Activated CD4-positive, alpha-beta memory T cell treated with anti-CD3 and anti-CD28 coated beads for 36 hours (primary cell): ENCODE measurements at regions of chr4 and their contacts with region 1.

Region 1: DNA sequence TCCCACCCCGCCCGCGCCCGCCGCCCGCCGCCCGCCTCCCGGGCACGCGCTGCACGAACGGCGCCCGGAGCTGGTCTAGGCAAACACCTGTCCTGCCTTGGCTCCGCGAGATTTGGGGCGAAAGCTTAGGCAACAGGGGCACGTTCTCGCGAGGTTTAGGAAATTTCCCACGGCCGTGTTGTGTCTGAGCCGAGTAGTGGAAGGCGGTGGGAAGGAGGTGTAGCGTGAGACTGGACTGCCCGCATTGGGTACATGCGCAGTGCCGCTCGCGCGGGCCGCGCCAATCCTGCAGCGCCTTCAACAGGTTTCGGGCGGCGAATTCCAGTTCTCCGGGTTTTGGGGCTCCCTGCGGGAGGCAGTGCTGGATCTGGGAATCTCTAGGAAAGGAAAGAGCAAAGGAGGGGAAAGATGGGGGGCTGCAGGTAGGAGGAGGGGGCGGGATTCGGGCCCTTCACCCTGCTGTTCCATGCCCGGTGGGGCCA is 1.3 kb upstream of the RBPJ start:
- DNase-seq: peak; percentile 99
- H3K4me3 Mint-ChIP-seq: peak overlapping the region; percentile 100
- H3K27ac Mint-ChIP-seq: peak overlapping the region; percentile 100
- H3K4me1 Mint-ChIP-seq: peaks cover 35% of the 10 kb centered on the region
- H3K27me3 Mint-ChIP-seq: no peaks in the 10 kb centered on the region

Region 2: GRCh38 chr4:25862411-25863346 is 456.8 kb before region 1 on chr4 and contains the start of gene SEL1L3:
- CTCF ChIA-PET with region 1: no interaction called
- POLR2A ChIA-PET with region 1: interaction called, 3 read pairs
- intact Hi-C with region 1: loop called (anchors 1 kb)
- DNase-seq: peak; percentile 74
- H3K4me3 Mint-ChIP-seq: peak within 1 kb of the TSS; percentile 99
- H3K27ac Mint-ChIP-seq: peak within 1 kb of the TSS; percentile 100
- H3K4me1 Mint-ChIP-seq: peaks cover 40% of the 10 kb centered on the region
- H3K27me3 Mint-ChIP-seq: peaks cover 2% of the 10 kb centered on the region
- total RNA-seq, gene SEL1L3: 67.1 to 67.7 TPM

Region 3: DNA sequence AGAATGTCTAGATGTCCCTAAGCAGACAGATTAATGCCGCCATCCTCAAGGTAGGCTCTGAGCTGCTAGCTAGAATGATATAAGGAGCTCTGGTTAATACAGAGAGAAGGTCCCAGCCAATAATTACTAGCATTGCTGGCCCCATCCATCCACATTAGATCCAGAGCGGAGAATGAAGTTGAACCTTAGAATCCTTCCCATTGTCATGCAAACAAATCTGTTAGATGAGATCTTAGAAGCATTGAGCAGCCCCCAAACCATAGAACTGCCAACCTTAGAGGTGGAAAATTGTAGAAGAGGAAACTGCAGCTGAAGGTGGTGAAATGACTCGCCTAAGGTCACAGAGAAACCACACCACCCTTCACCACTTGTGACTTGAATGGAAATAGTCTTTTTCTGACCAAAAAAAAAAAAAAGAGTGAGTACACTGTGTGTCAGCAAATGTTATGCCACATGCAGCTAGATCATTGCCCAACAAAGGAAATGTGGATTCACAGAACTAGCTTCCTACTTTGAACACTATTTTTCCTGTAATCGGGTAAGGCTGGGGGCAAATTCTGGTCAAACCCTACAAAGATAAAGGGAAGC is 243.4 kb before region 1 on chr4:
- CTCF ChIA-PET with region 1: interaction called, 24 read pairs
- POLR2A ChIA-PET with region 1: interaction called, 89 read pairs
- intact Hi-C with region 1: loop called (anchors 1 kb)
- DNase-seq: peak; percentile 81
- H3K4me3 Mint-ChIP-seq: peak overlapping the region; percentile 34
- H3K27ac Mint-ChIP-seq: peak overlapping the region; percentile 96
- H3K4me1 Mint-ChIP-seq: peaks cover 87% of the 10 kb centered on the region
- H3K27me3 Mint-ChIP-seq: no peaks in the 10 kb centered on the region

Region 4: GRCh38 chr4:26130173-26130572 is 189.3 kb before region 1 on chr4:
- CTCF ChIA-PET with region 1: interaction called, 3 read pairs
- POLR2A ChIA-PET with region 1: interaction called, 6 read pairs
- intact Hi-C with region 1: loop called (anchors 5 kb)
- DNase-seq: peak; percentile 59
- H3K4me3 Mint-ChIP-seq: no peak overlapping the region
- H3K27ac Mint-ChIP-seq: peak overlapping the region; percentile 67
- H3K4me1 Mint-ChIP-seq: peaks cover 62% of the 10 kb centered on the region
- H3K27me3 Mint-ChIP-seq: no peaks in the 10 kb centered on the region

Region 5: DNA sequence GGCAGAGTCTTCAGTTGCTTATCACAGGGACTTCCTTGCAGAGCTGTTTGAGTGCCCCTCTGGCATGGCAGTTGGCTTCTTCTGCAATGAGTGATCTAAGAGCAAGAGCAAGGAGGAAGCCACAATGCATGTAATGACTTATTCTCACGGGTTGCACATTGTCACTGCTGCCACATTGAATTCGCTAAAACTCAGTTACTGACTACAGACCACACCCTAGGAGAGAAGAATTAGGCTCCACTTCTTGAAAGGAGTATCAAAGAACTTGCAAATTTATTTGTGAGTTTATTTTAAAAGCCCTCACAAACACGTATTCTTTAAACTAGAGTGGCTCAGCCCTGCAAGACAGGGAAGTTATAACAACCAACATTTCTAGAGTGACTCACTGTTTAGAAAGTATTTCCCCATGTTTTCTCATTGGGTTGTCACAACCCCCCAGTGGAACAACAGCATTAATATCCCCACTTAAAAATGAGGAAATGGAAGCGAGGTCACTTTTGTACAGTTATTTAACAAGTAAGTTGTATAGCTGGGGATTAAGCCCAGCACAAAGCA is 31.1 kb before region 1 on chr4:
- CTCF ChIA-PET with region 1: interaction called, 4 read pairs
- POLR2A ChIA-PET with region 1: interaction called, 4 read pairs
- intact Hi-C with region 1: loop called (anchors 1 kb)
- DNase-seq: peak; percentile 74
- H3K4me3 Mint-ChIP-seq: no peak overlapping the region
- H3K27ac Mint-ChIP-seq: peak overlapping the region; percentile 66
- H3K4me1 Mint-ChIP-seq: peaks cover 25% of the 10 kb centered on the region
- H3K27me3 Mint-ChIP-seq: no peaks in the 10 kb centered on the region

Region 6: GRCh38 chr4:27000820-27001219 is 681.3 kb after region 1 on chr4:
- CTCF ChIA-PET with region 1: no interaction called
- POLR2A ChIA-PET with region 1: no interaction called
- intact Hi-C with region 1: loop called (anchors 5 kb)
- DNase-seq: no peak
- H3K4me3 Mint-ChIP-seq: no peak overlapping the region
- H3K27ac Mint-ChIP-seq: peak overlapping the region; percentile 51
- H3K4me1 Mint-ChIP-seq: peaks cover 52% of the 10 kb centered on the region
- H3K27me3 Mint-ChIP-seq: no peaks in the 10 kb centered on the region